Activated CD8-positive, alpha-beta T cell treated with anti-CD3 and anti-CD28 coated beads, Interleukin-2, amount 10 ng/mL, durations not matched to agents 7 days and 5 days (primary cell): ENCODE measurements at regions of chr14 and their contacts with region 1.

Region 1: DNA sequence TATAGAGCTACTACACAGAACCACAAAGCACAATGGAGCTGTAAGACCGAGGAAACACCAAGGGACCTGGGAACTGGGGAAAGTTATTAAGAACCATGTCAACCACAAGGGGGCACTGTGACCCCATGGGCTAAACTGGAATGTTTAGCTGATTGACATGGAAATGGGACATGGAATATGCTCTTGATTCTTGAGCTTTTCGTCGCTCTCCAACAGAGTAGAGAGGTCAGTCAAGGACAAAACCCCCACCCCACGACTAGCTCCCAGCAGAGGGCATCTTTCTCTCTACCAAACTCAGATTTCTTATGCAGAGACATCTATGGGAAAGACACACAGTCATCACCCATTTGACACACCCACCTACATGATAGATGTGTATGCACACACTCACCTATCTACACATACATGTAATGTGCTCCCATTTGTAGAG is 10.1 kb downstream of the NDRG2 start:
- DNase-seq: peak; percentile 82
- ATAC-seq: peak; percentile 80
- H3K4me3 Mint-ChIP-seq: no peak overlapping the region
- H3K27ac Mint-ChIP-seq: no peak overlapping the region
- H3K4me1 Mint-ChIP-seq: no peaks in the 10 kb centered on the region
- H3K27me3 Mint-ChIP-seq: peaks cover 21% of the 10 kb centered on the region

Region 2: GRCh38 chr14:20782280-20782890 is 232.4 kb before region 1 on chr14:
- CTCF ChIA-PET with region 1: no interaction called
- POLR2A ChIA-PET with region 1: no interaction called
- DNase-seq: peak; percentile 36
- ATAC-seq: peak; percentile 75
- H3K4me3 Mint-ChIP-seq: peak overlapping the region; percentile 67
- H3K27ac Mint-ChIP-seq: peak overlapping the region; percentile 84
- H3K4me1 Mint-ChIP-seq: peaks cover 28% of the 10 kb centered on the region
- H3K27me3 Mint-ChIP-seq: peaks cover 6% of the 10 kb centered on the region

Region 3: DNA sequence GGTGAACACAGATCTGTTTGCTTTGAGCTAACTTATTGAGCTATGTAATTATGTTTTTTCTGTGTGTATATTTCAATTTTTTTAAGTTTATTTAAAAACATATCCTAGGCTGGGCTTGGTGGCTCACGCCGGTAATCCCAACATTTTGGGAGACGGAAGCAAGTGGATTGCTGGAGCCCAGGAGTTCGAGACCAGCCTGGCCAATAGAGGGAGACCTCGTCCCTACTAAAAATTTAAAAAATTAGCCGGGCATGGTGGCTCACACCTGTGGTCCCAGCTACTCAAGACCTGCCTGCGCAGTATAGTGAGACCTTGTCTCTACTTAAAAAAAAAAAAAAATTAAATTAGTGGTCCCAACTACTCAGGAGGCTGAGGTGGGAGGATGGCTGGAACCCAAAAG is 195.9 kb before region 1 on chr14:
- CTCF ChIA-PET with region 1: no interaction called
- POLR2A ChIA-PET with region 1: no interaction called
- DNase-seq: no peak
- ATAC-seq: no peak
- H3K4me3 Mint-ChIP-seq: no peak overlapping the region
- H3K27ac Mint-ChIP-seq: no peak overlapping the region
- H3K4me1 Mint-ChIP-seq: no peaks in the 10 kb centered on the region
- H3K27me3 Mint-ChIP-seq: peaks cover 6% of the 10 kb centered on the region

Region 4: DNA sequence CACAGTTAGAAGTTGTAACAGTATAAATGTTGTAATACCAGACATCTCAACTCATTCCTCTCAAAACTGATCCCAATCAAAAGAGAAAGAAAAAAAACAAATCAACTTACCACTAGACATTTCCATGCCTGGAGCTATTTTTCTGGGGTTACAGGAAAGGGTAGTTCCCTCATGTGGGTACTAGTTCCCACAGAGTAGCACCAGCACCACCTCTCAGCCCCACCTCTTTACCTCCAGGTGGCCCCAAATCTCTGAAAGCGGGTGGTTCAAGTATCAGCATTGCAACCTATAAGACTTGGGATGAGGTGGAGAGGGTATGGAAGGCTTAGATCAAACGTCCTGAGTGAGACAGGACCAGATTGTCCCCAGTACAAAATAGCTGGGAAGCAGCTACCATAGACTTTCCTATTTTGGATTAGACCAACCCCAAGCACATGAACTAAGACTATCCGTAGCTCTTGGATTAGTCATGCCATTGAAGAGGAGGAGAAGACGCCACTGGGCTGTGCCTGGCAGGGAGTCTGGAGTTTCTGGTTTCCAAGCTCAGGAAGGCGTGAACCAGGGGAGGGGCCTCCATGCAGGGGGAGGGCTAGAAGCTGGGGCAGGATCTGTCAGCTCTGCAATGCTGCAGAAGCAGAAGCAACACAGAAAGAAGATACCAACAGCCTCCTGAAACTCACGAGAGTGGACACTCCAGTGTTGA is 16.0 kb before region 1 on chr14 and contains the start of gene SLC39A2:
- CTCF ChIA-PET with region 1: interaction called, 126 read pairs
- POLR2A ChIA-PET with region 1: no interaction called
- DNase-seq: no peak
- ATAC-seq: peak; percentile 20
- H3K4me3 Mint-ChIP-seq: no peak within 1 kb of the TSS
- H3K27ac Mint-ChIP-seq: peak within 1 kb of the TSS; percentile 51
- H3K4me1 Mint-ChIP-seq: peaks cover 12% of the 10 kb centered on the region
- H3K27me3 Mint-ChIP-seq: no peaks in the 10 kb centered on the region
- total RNA-seq, gene SLC39A2: not detected

Region 5: DNA sequence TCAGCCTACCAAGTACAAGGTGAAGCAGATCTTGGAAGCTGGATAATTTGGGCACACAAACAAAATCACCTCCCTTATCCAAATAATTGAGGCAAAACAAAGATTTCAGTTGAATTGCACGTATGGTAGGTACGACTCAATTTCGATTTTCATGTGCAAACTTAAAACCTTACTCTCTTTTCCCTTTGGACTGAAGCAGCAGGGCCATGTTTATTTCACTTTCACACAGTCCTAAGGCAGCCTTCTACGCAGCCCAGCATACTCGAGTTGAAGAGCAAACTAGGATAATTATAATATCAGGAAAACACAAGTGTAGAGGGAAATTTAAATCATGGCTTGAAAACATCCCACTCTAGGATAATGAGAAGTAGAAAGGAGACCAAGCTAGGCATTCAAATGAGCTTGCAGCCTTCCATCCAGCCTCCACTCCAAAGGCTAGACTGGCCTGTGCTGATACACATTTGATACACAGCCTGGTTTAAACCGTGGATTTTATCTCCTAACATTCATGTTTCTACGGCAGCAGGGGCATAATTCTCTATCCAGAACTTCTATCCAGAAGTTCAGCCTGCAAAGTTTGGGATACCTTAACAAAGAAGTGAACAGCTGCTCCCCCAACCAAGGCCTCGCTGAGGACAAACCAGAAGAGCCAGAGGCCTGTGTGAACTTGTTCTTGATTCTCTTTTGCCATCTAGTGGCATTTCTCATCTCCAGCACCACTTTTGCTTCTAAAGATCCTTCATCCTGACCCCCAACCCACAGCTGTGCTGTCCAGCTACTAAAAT is 25.0 kb after region 1 on chr14:
- CTCF ChIA-PET with region 1: interaction called, 172 read pairs
- POLR2A ChIA-PET with region 1: interaction called, 3 read pairs
- DNase-seq: peak; percentile 29
- ATAC-seq: peak; percentile 67
- H3K4me3 Mint-ChIP-seq: no peak overlapping the region
- H3K27ac Mint-ChIP-seq: no peak overlapping the region
- H3K4me1 Mint-ChIP-seq: peaks cover 6% of the 10 kb centered on the region
- H3K27me3 Mint-ChIP-seq: peaks cover 22% of the 10 kb centered on the region

Region 6: DNA sequence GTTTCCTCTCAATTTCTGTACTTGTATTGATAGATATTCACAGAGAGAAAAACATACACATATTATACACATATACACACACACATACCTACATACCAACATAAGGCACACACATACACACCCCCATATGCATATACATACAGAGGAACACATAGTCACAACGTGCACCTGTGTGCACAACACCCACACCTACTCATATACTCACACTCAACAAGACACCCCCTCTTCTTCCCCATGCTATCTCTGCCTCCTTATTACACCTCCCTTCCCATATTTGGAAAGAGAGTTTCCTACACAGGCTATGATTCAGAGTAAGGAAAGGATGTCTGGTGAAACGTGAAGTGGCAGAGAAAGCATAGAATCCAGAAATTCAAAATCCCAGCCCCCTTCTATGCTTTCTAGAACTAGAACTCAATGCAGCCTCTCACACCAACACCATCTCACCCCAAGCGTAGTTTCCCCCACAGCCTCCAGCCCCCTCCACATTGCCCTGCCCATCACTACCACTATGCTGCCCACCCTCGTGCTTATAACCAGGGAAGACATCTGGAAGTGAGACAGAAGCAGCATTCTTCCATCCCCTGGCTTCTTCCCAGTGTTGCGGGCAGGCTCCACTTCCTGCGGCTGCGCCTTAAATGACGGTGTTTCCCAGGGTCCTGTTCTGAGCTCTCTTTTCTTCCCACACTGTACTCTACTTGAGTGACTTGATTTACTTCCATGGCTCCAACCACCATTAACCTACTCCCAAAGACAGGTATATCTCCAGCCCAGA is 45.3 kb after region 1 on chr14:
- CTCF ChIA-PET with region 1: interaction called, 44 read pairs
- POLR2A ChIA-PET with region 1: no interaction called
- DNase-seq: no peak
- ATAC-seq: no peak
- H3K4me3 Mint-ChIP-seq: no peak overlapping the region
- H3K27ac Mint-ChIP-seq: no peak overlapping the region
- H3K4me1 Mint-ChIP-seq: no peaks in the 10 kb centered on the region
- H3K27me3 Mint-ChIP-seq: peaks cover 38% of the 10 kb centered on the region

Region 7: GRCh38 chr14:21092273-21093011 is 77.7 kb after region 1 on chr14:
- CTCF ChIA-PET with region 1: interaction called, 138 read pairs
- POLR2A ChIA-PET with region 1: no interaction called
- DNase-seq: peak; percentile 92
- ATAC-seq: peak; percentile 70
- H3K4me3 Mint-ChIP-seq: no peak overlapping the region
- H3K27ac Mint-ChIP-seq: no peak overlapping the region
- H3K4me1 Mint-ChIP-seq: peaks cover 25% of the 10 kb centered on the region
- H3K27me3 Mint-ChIP-seq: peaks cover 27% of the 10 kb centered on the region

Region 8: DNA sequence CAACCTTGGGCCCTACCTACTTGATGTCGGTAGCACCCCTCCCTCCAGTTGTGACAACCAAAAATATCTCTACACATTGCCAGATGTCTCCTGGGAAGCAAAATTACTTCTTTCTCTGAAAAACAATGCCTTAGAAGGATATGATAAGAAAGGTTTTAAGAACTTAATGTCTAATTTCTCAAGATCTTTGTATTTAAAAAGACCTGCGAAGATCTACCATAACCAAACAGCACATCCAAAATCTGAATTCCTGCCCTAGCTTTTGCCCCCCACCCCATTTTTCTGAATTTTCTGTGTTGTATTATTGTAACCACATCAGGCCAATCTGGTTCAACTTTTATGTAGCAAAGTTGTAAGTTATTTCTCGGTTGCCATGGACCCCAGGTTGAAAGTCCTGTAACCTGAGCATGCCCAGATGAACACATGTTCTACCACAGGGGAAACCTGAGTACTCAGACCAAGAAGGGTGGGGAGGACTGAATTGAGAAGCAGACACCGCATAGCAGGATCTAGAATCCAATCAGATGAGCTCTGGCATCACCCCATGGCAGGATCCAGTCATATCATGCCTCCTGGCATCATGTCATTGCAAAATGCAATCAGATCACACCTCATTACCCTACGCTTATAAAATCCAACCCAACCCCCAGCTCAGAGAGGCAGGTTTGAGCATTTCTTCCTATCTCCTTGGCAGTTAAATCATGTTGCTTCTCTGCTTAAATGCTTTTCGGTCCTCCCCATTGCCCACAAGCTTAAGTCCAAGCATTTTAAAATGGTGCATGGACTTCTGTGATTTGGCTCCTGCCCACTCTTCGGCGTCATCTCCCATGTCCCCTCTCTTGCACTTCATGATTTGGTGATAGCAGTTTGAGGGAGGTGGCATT is 94.8 kb after region 1 on chr14:
- CTCF ChIA-PET with region 1: interaction called, 193 read pairs
- POLR2A ChIA-PET with region 1: interaction called, 6 read pairs
- DNase-seq: no peak
- ATAC-seq: no peak
- H3K4me3 Mint-ChIP-seq: no peak overlapping the region
- H3K27ac Mint-ChIP-seq: no peak overlapping the region
- H3K4me1 Mint-ChIP-seq: peaks cover 13% of the 10 kb centered on the region
- H3K27me3 Mint-ChIP-seq: peaks cover 3% of the 10 kb centered on the region